ENCODE measurements at regions of chrX and their contacts with region 1.

Region 1: GRCh38 chrX:56995271-56995994 is at the start of gene SPIN3:
- DNase-seq: peak; percentile 44 to 60 (median 49)
- H3K4me3 ChIP-seq: peak within 1 kb of the TSS; percentile 36 to 58
- H3K4me3 Mint-ChIP-seq: peak within 1 kb of the TSS; percentile 88 to 95 (median 93)
- H3K27ac ChIP-seq: peak within 1 kb of the TSS; percentile 47
- H3K27ac Mint-ChIP-seq: peak within 1 kb of the TSS; percentile 87 to 96 (median 92)
- H3K4me1 ChIP-seq: peaks cover 33% of the 10 kb centered on the region
- H3K4me1 Mint-ChIP-seq: peaks cover 18 to 58% (median 34%) of the 10 kb centered on the region in 4 donors
- H3K27me3 ChIP-seq: no peaks in the 10 kb centered on the region
- H3K27me3 Mint-ChIP-seq: no peaks in the 10 kb centered on the region
- total RNA-seq, gene SPIN3: 22.7 to 23.1 TPM

Region 2: DNA sequence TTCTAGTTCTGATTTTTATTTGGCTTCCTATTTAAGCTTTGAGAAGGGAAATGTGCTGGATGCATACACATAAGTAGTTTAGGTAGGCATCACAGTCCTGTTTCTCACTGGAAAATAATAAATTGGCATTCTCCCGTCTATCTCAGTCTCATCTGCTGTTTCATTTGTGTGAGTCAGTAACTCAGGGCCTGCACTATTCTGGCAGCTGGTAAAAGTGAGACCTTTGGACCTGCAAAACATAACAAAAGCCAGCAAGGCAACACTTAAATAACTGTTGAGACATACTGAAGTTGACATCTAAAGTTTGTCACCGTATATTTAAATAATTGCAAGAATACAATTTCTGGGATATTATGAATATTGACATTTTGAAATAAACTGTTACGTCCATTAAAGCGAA is 440.6 kb before region 1 on chrX:
- CTCF ChIA-PET with region 1: no interaction called
- POLR2A ChIA-PET with region 1: no interaction called
- intact Hi-C with region 1: no loop called
- DNase-seq: no peak
- H3K4me3 ChIP-seq: no peak overlapping the region
- H3K4me3 Mint-ChIP-seq: no peak overlapping the region
- H3K27ac ChIP-seq: no peak overlapping the region
- H3K27ac Mint-ChIP-seq: no peak overlapping the region
- H3K4me1 ChIP-seq: no peaks in the 10 kb centered on the region
- H3K4me1 Mint-ChIP-seq: no peaks in the 10 kb centered on the region
- H3K27me3 ChIP-seq: no peaks in the 10 kb centered on the region
- H3K27me3 Mint-ChIP-seq: no peaks in the 10 kb centered on the region

Region 3: GRCh38 chrX:57121162-57121741 is 125.8 kb after region 1 on chrX and contains the start of gene SPIN2B:
- CTCF ChIA-PET with region 1: no interaction called
- POLR2A ChIA-PET with region 1: interaction called, 6 read pairs
- intact Hi-C with region 1: loop called (anchors 10 kb)
- DNase-seq: peak; percentile 66 to 86 (median 76)
- H3K4me3 ChIP-seq: peak within 1 kb of the TSS in 1 of 2 donors; percentile 54
- H3K4me3 Mint-ChIP-seq: peak within 1 kb of the TSS; percentile 91 to 96 (median 93)
- H3K27ac ChIP-seq: peak within 1 kb of the TSS; percentile 59
- H3K27ac Mint-ChIP-seq: peak within 1 kb of the TSS; percentile 87 to 96 (median 92)
- H3K4me1 ChIP-seq: no peaks in the 10 kb centered on the region
- H3K4me1 Mint-ChIP-seq: peaks cover 6 to 23% (median 9%) of the 10 kb centered on the region in 4 donors
- H3K27me3 ChIP-seq: no peaks in the 10 kb centered on the region
- H3K27me3 Mint-ChIP-seq: no peaks in the 10 kb centered on the region
- total RNA-seq, gene SPIN2B: 16.6 to 22.6 TPM